ENCODE measurements at regions of chr16 and their contacts with region 1.

Region 1: DNA sequence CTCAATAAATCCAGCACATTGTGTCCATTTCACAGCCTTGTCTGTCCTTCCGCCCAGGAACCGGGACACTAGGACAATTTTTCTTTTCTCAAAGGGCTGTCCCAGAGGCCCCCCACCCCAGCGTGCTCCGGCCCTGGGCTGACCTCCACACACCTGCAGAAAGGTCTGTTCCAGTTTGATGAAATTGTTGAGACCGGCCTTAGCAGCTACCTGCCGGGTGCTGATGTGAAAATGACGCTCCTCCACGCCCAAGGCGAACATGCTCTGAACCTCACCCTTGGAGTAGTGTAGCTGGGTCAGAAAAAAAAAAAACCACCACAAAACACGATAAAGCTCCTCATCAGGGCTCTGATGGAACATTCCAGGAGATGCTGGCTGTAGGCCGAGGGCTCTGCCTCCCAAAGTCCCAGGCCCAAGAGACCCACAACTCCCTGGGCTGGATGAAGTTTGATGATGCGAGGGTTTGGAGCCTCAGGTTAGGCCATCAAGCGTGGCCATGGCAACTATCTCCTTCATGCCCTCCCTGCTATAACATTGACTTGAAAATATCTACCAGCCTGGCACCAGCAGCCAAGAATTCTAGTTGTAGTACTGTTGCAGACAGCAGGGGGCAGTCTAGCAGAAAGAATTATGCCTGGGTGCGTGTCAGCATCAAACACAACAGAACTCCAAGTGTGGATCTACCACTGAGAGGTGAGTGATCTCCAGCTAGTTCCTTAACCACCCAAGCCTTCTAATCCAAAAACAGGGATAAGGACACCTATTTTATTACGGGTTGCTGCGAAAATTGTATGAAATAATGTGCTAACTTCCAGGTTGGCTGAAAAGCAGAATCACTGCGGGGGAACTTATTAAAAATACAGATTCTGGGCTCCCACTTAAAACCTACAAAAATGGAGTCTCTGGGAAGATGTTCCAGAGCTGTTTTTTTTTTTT is 62.1 kb downstream of the RMI2 start:
- DNase-seq: peak; percentile 63 to 72 (median 65)
- H3K4me3 ChIP-seq: no peak overlapping the region
- H3K4me3 Mint-ChIP-seq: no peak overlapping the region
- H3K27ac ChIP-seq: no peak overlapping the region
- H3K27ac Mint-ChIP-seq: peak overlapping the region in 1 of 7 donors; percentile 18
- H3K4me1 ChIP-seq: peaks cover 17 to 23% of the 10 kb centered on the region in 2 donors
- H3K4me1 Mint-ChIP-seq: peaks cover 19% of the 10 kb centered on the region
- H3K27me3 ChIP-seq: no peaks in the 10 kb centered on the region
- H3K27me3 Mint-ChIP-seq: peaks cover 1 to 7% (median 5%) of the 10 kb centered on the region in 3 donors
- CTCF ChIP-seq: peak; percentile 85

Region 2: GRCh38 chr16:11379420-11379819 is 27.9 kb before region 1 on chr16:
- intact Hi-C with region 1: no loop called
- DNase-seq: peak in 2 of 3 donors; percentile 64 to 90
- H3K4me3 ChIP-seq: no peak overlapping the region
- H3K4me3 Mint-ChIP-seq: peak overlapping the region in 1 of 2 donors; percentile 41
- H3K27ac ChIP-seq: no peak overlapping the region
- H3K27ac Mint-ChIP-seq: peak overlapping the region in 1 of 7 donors; percentile 48
- H3K4me1 ChIP-seq: no peaks in the 10 kb centered on the region
- H3K4me1 Mint-ChIP-seq: peaks cover 8% of the 10 kb centered on the region
- H3K27me3 ChIP-seq: peaks cover 1 to 4% of the 10 kb centered on the region in 2 donors
- H3K27me3 Mint-ChIP-seq: peaks cover 14 to 59% (median 15%) of the 10 kb centered on the region in 3 donors
- CTCF ChIP-seq: no peak

Region 3: DNA sequence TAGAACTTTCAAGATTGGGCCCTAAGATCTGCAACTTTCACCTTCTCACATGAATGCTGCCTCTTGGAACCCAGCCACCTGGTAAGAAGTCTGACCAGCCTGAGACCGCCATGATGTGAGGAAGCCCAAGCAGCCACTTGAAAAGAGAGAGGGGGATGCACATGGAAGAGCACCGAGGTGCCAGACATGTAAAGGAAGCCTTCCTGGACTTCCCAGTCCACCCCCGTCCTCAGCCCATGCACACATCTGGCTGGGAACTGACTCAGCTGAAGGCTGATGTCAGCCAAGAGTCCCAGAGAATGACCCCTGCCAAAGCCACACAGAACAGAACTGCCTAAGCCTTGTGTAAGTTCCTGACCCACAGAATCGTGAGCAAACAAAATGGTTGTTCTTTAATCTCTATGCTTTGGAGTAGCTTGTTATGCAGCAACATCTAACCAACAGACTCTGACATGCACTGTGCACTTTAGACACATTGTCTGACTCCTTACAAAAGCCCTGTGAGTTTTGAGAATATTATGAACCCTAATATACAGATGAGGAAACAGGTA is 24.7 kb after region 1 on chr16:
- intact Hi-C with region 1: no loop called
- DNase-seq: no peak
- H3K4me3 ChIP-seq: no peak overlapping the region
- H3K4me3 Mint-ChIP-seq: no peak overlapping the region
- H3K27ac ChIP-seq: no peak overlapping the region
- H3K27ac Mint-ChIP-seq: no peak overlapping the region
- H3K4me1 ChIP-seq: peaks cover 3 to 6% of the 10 kb centered on the region in 2 donors
- H3K4me1 Mint-ChIP-seq: peaks cover 12% of the 10 kb centered on the region
- H3K27me3 ChIP-seq: no peaks in the 10 kb centered on the region
- H3K27me3 Mint-ChIP-seq: peaks cover 1 to 4% (median 1%) of the 10 kb centered on the region in 3 donors
- CTCF ChIP-seq: no peak

Region 4: DNA sequence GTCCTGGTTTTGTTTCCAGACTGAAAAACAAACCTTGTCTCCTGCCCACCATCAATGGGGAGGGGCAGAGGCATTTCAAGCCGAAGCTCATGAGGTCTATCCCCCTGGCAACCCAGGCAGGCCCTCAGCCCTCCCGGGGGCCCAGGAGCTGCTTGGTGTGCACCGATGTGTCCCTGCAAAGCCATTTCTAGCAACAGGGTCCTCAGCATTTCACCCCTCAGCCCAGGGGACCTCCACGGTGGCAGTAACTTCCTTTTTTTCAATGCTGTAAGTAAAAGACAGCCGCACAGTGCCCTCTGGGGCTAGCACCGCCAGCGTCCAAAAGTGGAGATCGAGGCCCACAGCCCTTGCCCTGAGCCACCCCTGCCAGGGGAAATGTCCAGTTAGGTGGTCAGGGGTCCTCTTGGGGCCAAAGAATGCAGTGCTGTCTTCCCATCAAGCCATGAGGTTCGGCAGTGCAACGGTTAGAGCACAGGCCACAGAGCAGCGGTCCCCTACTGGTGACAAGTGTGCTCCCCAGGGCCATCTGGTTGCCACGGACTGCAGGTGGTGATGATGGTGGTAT is 99.5 kb after region 1 on chr16:
- intact Hi-C with region 1: loop called in 1 of 2 experiments (anchors 2 kb)
- DNase-seq: peak; percentile 34 to 46 (median 41)
- H3K4me3 ChIP-seq: peak overlapping the region in 2 of 3 experiments; percentile 25 to 63
- H3K4me3 Mint-ChIP-seq: peak overlapping the region; percentile 67 to 86
- H3K27ac ChIP-seq: no peak overlapping the region
- H3K27ac Mint-ChIP-seq: peak overlapping the region in 5 of 7 donors; percentile 25 to 80 (median 70)
- H3K4me1 ChIP-seq: peaks cover 10 to 11% of the 10 kb centered on the region in 2 donors
- H3K4me1 Mint-ChIP-seq: peaks cover 22% of the 10 kb centered on the region
- H3K27me3 ChIP-seq: no peaks in the 10 kb centered on the region
- H3K27me3 Mint-ChIP-seq: peaks cover 6 to 14% (median 8%) of the 10 kb centered on the region in 3 donors
- CTCF ChIP-seq: peak; percentile 58